HepG2 (cell line): ENCODE measurements at regions of chr1 and their contacts with region 1.

Region 1: DNA sequence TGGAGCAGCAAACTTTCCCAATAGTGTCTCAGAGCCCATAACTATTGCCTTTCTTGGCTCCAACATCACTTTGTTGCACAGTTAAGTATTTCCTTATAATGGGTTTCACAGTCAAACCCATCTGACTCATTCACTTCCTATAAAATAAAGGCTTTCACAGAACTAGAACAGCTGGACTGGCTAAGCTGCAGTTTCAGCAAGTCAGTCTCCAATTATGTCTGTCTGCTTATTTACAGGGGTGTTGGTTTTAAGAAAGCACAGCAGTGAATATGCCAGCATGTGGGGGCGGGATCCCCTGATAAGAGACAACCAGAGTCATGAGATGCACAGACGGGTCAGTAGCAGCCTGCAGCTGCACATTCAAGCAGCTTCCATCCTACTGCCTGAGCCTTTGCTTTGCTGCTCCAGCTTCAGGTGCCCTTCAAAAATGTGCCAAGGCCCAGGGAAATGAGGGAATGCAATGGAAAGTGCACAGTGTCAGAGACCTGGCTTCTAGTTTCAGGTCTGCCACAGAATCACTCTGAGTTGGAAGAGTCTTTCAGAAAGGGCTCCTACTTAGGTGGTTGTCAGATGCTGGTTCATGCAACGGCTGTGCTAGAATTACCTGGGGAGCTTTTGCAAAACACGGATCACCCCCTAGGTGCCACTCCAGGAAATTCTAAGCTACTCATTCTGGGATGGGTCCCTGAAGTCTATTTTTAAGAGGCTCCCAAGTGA is 24.8 kb downstream of the RNF19B start:
- DNase-seq: no peak
- ATAC-seq: no peak
- H3K4me3 ChIP-seq: no peak overlapping the region
- H3K27ac ChIP-seq: no peak overlapping the region
- H3K4me1 ChIP-seq: peaks cover 30% of the 10 kb centered on the region
- H3K27me3 ChIP-seq: no peaks in the 10 kb centered on the region
- CTCF ChIP-seq: no peak
- EP300 ChIP-seq: no peak
- POLR2A ChIP-seq: no peak
- RAD21 ChIP-seq: no peak

Region 2: DNA sequence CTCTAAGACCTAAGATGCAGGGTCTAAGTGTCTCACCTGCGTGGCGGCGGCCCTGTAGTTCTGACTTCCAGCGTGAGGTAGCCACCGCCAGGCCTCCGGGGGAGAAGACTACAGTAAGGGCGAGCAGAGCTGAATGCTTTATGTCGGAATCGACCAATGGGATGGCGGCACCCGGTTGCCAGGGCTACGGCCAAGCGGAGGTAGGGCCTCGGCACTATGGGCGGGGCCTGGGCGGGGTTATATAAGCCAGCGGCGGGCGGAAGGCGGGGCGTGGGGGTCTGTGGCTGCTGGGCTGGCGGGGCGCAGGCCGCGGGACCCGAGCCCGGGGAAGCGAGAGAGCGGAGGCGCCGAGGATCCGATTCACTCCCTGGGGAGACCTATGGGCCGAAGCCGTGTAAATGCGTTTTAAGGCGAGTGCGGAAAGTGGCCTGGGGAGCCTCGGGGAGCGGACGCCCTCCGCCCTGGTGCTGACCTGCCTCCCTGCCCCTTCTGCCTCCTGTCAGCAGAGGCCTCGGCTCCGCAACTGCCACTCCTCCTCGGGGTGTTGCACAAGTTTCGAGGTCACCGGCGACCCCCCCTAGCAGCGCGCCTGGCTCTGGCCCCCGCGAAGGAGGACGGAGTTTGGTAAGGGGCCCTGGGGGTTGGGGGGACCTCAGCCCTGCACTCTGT is 141.2 kb after region 1 on chr1 and contains the start of gene AZIN2:
- CTCF ChIA-PET with region 1: no interaction called
- POLR2A ChIA-PET with region 1: no interaction called
- in situ Hi-C with region 1: no loop called
- intact Hi-C with region 1: loop called (anchors 10 kb)
- DNase-seq: peak; percentile 90
- ATAC-seq: peak; percentile 98
- H3K4me3 ChIP-seq: peak within 1 kb of the TSS; percentile 59 to 87 (median 76)
- H3K27ac ChIP-seq: no peak within 1 kb of the TSS
- H3K4me1 ChIP-seq: peaks cover 24% of the 10 kb centered on the region
- H3K27me3 ChIP-seq: no peaks in the 10 kb centered on the region
- CTCF ChIP-seq: peak; percentile 20; the same call in 1 of the 2 replicates
- EP300 ChIP-seq: no peak; a peak in 1 of 4 replicates
- POLR2A ChIP-seq: peak; percentile 56 to 93
- RAD21 ChIP-seq: no peak
- total RNA-seq, gene AZIN2: 1.5 and 1.7 TPM in 2 replicates